IMR-90 (cell line): ENCODE measurements at regions of chr17 and their contacts with region 1.

Region 1: GRCh38 chr17:57130761-57131461 is 45.9 kb downstream of the AKAP1 start:
- DNase-seq: peak; percentile 70
- ATAC-seq: peak; percentile 99
- H3K4me3 ChIP-seq: peak overlapping the region; percentile 42; the same call in 1 of the 2 replicates
- H3K27ac ChIP-seq: no peak overlapping the region
- H3K4me1 ChIP-seq: no peaks in the 10 kb centered on the region
- H3K27me3 ChIP-seq: peaks cover 7% of the 10 kb centered on the region
- CTCF ChIP-seq: peak; percentile 78
- POLR2A ChIP-seq: no peak
- RAD21 ChIP-seq: peak; percentile 89

Region 2: DNA sequence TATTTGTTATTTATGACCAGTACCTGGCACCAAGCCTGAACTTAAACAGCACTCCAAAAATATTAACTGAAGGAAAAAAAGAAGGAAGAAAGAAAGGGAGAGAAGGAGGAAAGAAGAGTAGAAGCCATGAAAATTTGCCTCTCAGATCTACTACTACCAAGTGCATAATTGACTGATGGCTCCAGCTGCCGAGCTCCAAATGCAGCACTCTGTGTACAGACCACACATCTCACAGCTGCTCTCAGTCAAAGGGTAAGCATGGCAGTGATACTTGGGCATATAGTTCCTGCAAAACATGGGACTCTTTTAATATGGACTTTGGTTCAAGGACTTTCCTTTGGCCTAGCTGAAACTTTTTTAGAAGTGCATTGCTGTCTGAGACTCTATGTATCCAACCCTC is 581.4 kb before region 1 on chr17:
- CTCF ChIA-PET with region 1: no interaction called
- POLR2A ChIA-PET with region 1: no interaction called
- dilution Hi-C with region 1: no loop called
- in situ Hi-C with region 1: no loop called
- intact Hi-C with region 1: no loop called
- DNase-seq: no peak
- ATAC-seq: no peak
- H3K4me3 ChIP-seq: no peak overlapping the region
- H3K27ac ChIP-seq: no peak overlapping the region
- H3K4me1 ChIP-seq: no peaks in the 10 kb centered on the region
- H3K27me3 ChIP-seq: peaks cover 2% of the 10 kb centered on the region; the same call in 1 of the 2 replicates
- CTCF ChIP-seq: no peak
- POLR2A ChIP-seq: no peak
- RAD21 ChIP-seq: no peak

Region 3: GRCh38 chr17:57284984-57285646 is 154.2 kb after region 1 on chr17:
- CTCF ChIA-PET with region 1: no interaction called
- POLR2A ChIA-PET with region 1: no interaction called
- dilution Hi-C with region 1: no loop called
- in situ Hi-C with region 1: no loop called
- intact Hi-C with region 1: no loop called
- DNase-seq: no peak
- ATAC-seq: no peak
- H3K4me3 ChIP-seq: no peak overlapping the region
- H3K27ac ChIP-seq: no peak overlapping the region
- H3K4me1 ChIP-seq: peaks cover 3% of the 10 kb centered on the region; the same call in 1 of the 2 replicates
- H3K27me3 ChIP-seq: no peaks in the 10 kb centered on the region
- CTCF ChIP-seq: no peak
- POLR2A ChIP-seq: no peak
- RAD21 ChIP-seq: no peak

Region 4: GRCh38 chr17:57597531-57598453 is 466.9 kb after region 1 on chr17:
- CTCF ChIA-PET with region 1: no interaction called
- POLR2A ChIA-PET with region 1: no interaction called
- dilution Hi-C with region 1: no loop called
- in situ Hi-C with region 1: no loop called
- intact Hi-C with region 1: loop called (anchors 10 kb)
- DNase-seq: peak; percentile 82
- ATAC-seq: peak; percentile 88
- H3K4me3 ChIP-seq: no peak overlapping the region
- H3K27ac ChIP-seq: no peak overlapping the region
- H3K4me1 ChIP-seq: peaks cover 4% of the 10 kb centered on the region
- H3K27me3 ChIP-seq: no peaks in the 10 kb centered on the region
- CTCF ChIP-seq: peak; percentile 85
- POLR2A ChIP-seq: no peak
- RAD21 ChIP-seq: peak; percentile 85

Region 5: DNA sequence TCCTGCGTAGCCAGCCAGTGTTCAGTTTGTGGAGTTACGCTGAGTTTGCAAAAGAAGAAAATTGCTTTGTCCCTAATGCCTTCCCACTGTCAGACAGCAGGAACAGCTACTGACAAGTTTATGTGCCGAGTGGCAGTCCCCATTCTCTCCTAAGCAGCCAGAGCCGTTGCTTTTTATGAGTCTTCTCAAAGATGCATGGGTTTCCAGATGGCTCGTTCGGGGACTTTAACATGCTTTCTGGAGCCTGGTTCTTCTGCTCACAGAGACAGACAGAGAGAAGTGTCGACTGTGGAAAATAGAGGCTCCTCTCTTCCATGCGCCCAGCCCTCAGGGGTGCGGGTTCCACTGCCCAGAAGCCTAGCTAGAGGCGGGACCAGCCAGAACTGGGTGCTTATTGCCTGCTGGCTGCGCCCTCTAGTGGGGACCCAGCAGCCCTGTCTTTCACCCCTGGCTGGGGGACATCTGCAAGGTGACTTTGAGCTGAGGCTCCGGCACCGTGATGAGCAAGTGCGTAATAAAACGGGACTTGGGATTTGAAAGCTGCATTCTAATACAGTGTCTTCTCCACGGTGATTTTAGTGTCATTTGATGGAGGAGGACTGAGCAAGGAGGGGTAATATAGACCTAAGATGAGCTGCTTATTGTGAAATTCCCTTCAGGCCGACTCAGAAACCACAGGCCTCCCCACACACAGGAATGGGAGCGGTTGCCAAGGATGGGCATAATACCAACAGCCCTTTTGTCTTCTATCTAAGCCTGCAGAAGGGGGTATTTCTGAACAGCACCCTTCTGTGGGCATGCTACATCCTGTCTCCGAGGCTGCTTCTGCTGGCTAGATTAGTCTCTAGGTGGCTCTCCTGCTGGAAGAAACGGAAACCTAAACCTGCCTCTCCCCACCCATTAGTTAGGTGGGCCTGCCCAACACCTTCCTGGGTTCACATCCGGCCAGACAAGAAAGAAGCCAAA is 541.0 kb after region 1 on chr17:
- CTCF ChIA-PET with region 1: no interaction called
- POLR2A ChIA-PET with region 1: no interaction called
- dilution Hi-C with region 1: no loop called
- in situ Hi-C with region 1: no loop called
- intact Hi-C with region 1: loop called (anchors 1 kb)
- DNase-seq: peak; percentile 69
- ATAC-seq: peak; percentile 99
- H3K4me3 ChIP-seq: no peak overlapping the region
- H3K27ac ChIP-seq: no peak overlapping the region
- H3K4me1 ChIP-seq: peaks cover 12% of the 10 kb centered on the region
- H3K27me3 ChIP-seq: no peaks in the 10 kb centered on the region
- CTCF ChIP-seq: peak; percentile 89
- POLR2A ChIP-seq: 0 out of 2 replicates have a peak, but pooled peaks have one; percentile 25
- RAD21 ChIP-seq: peak; percentile 93

Region 6: GRCh38 chr17:57747221-57748017 is 616.5 kb after region 1 on chr17:
- CTCF ChIA-PET with region 1: interaction called, 3 read pairs
- POLR2A ChIA-PET with region 1: no interaction called
- dilution Hi-C with region 1: no loop called
- in situ Hi-C with region 1: loop called (anchors 10 kb)
- intact Hi-C with region 1: loop called (anchors 1 kb)
- DNase-seq: peak; percentile 73
- ATAC-seq: peak; percentile 93
- H3K4me3 ChIP-seq: no peak overlapping the region
- H3K27ac ChIP-seq: no peak overlapping the region
- H3K4me1 ChIP-seq: no peaks in the 10 kb centered on the region
- H3K27me3 ChIP-seq: peaks cover 38% of the 10 kb centered on the region
- CTCF ChIP-seq: peak; percentile 91
- POLR2A ChIP-seq: no peak
- RAD21 ChIP-seq: peak; percentile 91

Region 7: DNA sequence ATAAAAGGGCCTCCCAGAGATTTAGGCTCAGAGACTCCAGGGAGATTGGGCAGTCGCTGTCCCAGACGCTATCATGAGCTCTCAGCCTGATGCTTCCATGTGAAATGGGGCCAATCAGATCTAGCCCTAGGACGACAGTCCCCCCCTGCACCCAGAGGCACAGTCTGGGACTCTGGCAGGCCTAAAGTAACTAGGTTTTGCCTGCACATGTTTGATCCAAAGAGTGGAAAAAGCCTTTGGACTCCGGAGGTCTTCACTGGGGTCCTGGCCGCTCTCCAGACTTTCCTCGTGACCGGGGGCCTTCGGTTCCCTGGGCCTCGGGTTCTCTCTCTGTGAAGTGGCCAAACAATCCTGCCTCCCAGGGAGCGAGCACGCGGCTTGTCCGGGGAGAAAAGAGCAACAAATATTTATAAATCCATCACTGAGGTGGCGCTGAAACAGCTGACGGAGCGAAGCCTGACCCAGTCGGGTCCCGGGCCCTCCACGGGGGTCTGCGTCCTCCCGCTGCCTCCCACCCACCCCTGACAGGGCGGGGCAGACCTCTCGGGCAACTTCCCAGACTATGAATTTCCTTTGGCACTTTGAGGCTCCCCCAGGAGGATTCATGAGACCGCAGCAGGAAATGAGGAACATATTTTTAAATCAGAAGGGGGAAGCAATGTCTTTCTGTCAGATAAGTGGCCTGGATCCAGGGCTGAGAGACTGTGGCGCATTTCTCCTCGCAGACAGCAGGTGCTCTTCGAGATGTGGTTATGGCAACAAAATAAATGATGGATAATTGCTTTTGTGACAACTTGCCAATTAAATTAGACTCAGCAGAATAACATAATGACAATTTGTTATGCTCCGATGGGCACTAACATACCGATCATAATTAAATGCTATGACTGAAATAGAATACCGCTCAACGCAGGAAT is 680.1 kb after region 1 on chr17:
- CTCF ChIA-PET with region 1: no interaction called
- POLR2A ChIA-PET with region 1: interaction called, 15 read pairs
- dilution Hi-C with region 1: no loop called
- in situ Hi-C with region 1: no loop called
- intact Hi-C with region 1: no loop called
- DNase-seq: peak; percentile 4
- ATAC-seq: peak; percentile 51
- H3K4me3 ChIP-seq: no peak overlapping the region
- H3K27ac ChIP-seq: no peak overlapping the region
- H3K4me1 ChIP-seq: no peaks in the 10 kb centered on the region
- H3K27me3 ChIP-seq: peaks cover 26% of the 10 kb centered on the region
- CTCF ChIP-seq: no peak
- POLR2A ChIP-seq: no peak
- RAD21 ChIP-seq: no peak

Region 8: GRCh38 chr17:57833179-57833939 is 702.4 kb after region 1 on chr17:
- CTCF ChIA-PET with region 1: interaction called, 6 read pairs
- POLR2A ChIA-PET with region 1: no interaction called
- dilution Hi-C with region 1: no loop called
- in situ Hi-C with region 1: loop called (anchors 5 kb)
- intact Hi-C with region 1: loop called (anchors 1 kb)
- DNase-seq: peak; percentile 76
- ATAC-seq: peak; percentile 93
- H3K4me3 ChIP-seq: peak overlapping the region; percentile 58
- H3K27ac ChIP-seq: no peak overlapping the region; the same call in 1 of the 2 replicates
- H3K4me1 ChIP-seq: 0 out of 2 replicates have a peak, but pooled peaks cover 2% of the 10 kb centered on the region
- H3K27me3 ChIP-seq: no peaks in the 10 kb centered on the region
- CTCF ChIP-seq: peak; percentile 86
- POLR2A ChIP-seq: no peak
- RAD21 ChIP-seq: peak; percentile 79

Region 9: DNA sequence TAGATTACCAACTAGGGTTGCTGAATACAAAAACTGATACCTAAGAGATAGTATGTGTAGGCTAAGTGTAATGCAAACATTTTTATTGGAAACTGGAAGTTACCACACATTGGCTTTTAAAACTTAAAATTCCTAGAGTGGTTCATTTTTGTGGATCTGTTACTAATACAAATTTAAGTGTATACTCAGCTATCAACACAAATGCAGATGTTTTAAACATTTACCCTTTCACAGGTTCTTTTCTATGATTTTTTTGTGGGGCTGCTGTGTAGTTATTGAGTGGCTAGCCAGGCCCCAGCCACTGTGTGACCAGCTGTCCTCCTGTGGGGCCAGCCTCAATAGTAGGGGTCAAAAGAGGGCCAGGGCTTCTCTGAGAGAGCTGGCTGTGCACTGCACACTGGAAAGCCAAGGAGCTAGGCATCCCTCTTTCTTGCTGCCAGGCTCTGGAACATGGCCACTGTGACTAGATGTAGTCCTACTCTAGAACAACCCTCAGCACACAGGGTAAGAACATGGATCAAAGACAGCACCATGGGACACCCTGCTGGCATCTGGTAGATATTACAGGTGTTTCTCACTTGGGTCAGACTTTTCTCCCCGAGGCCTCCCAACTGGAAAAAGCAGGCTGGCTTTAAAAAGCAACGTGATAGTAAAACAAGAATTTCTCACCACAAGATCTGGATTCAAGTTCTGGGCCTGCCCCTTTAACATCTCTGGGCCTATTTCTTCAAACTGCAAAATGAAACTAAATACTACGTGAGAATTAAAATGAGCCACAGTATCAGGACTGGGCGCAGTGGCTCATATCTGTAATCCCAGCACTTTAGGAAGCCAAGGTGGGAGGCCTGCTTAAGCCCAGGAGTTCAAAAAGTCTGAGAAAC is 864.4 kb after region 1 on chr17:
- CTCF ChIA-PET with region 1: no interaction called
- POLR2A ChIA-PET with region 1: no interaction called
- dilution Hi-C with region 1: no loop called
- in situ Hi-C with region 1: loop called (anchors 10 kb)
- intact Hi-C with region 1: loop called (anchors 1 kb)
- DNase-seq: peak; percentile 81
- ATAC-seq: peak; percentile 91
- H3K4me3 ChIP-seq: no peak overlapping the region
- H3K27ac ChIP-seq: no peak overlapping the region
- H3K4me1 ChIP-seq: peaks cover 2% of the 10 kb centered on the region; the same call in 1 of the 2 replicates
- H3K27me3 ChIP-seq: no peaks in the 10 kb centered on the region
- CTCF ChIP-seq: peak; percentile 73
- POLR2A ChIP-seq: no peak
- RAD21 ChIP-seq: peak; percentile 90